ENCODE measurements at regions of chr4 and their contacts with region 1.

Region 1: GRCh38 chr4:38759113-38759789 is 23.5 kb downstream of the TLR10 start:
- H3K4me3 Mint-ChIP-seq: no peak overlapping the region
- H3K27ac Mint-ChIP-seq: peak overlapping the region; percentile 53
- H3K4me1 Mint-ChIP-seq: peaks cover 42% of the 10 kb centered on the region
- H3K27me3 Mint-ChIP-seq: no peaks in the 10 kb centered on the region

Region 2: GRCh38 chr4:38373375-38373774 is 385.9 kb before region 1 on chr4:
- intact Hi-C with region 1: no loop called
- H3K4me3 Mint-ChIP-seq: no peak overlapping the region
- H3K27ac Mint-ChIP-seq: peak overlapping the region; percentile 16
- H3K4me1 Mint-ChIP-seq: peaks cover 41% of the 10 kb centered on the region
- H3K27me3 Mint-ChIP-seq: no peaks in the 10 kb centered on the region

Region 3: DNA sequence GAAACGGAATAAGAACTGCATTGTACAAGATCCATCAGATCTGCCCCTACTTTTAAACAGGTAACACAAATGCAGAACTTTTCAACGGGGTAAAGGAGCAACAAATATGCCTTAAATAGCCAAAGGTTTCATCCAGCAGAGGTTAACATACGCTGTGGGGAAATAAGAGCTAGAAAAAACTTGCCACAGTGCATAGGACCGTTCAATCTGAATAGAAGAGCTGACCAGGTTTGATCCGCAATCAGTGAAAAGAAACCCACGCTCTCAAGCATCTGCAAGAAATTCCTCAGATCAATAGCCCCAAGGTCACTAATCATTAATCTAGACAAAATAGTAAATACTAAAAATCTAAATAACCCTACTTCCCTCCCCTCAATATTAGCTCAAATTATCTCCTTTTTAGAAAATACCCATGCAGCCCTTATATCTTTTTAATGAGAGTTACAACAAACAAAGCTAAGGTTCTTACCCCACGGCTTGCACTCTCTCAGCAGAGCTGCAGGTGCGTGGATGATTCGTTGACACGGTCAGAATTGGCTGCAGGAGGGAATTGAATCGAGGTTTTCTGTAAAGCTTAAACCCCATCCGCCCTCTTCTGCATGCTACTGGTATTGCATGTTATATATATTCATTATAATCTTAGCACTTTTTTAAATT is 23.3 kb after region 1 on chr4 and contains the start of gene TLR10:
- intact Hi-C with region 1: loop called (anchors 2 kb)
- H3K4me3 Mint-ChIP-seq: no peak within 1 kb of the TSS
- H3K27ac Mint-ChIP-seq: no peak within 1 kb of the TSS
- H3K4me1 Mint-ChIP-seq: peaks cover 44% of the 10 kb centered on the region
- H3K27me3 Mint-ChIP-seq: no peaks in the 10 kb centered on the region

Region 4: DNA sequence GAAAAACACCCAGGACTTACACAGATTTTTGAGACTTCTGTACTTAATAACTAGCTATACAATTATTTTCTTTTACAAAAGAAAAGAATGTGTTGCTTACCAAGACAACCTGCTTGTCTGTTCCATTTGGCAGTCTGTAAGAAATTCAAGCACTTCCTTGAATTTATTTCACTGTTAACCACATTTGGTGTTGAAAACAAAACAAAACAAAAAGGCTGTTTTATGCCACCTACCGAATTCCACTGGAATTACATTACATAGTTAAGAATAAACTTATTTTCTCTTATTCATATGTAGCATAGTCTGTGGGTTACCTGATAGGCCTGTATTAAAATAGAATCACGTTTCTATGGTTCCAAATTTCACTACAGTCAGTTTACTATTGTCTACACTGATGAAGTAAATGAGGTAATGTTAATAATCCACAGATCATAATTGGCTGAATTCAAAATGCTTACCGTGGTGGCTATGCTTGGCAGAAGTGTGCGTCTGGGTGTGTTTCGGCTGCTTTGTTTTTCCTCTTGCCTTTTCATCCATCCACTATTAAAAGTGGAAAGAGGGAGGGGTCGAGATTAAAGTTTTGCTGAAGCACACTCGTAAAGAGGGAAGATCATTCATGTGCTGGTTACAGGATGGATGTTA is 45.5 kb after region 1 on chr4 and contains the start of gene TLR1:
- intact Hi-C with region 1: loop called (anchors 1 kb)
- H3K4me3 Mint-ChIP-seq: peak within 1 kb of the TSS; percentile 88
- H3K27ac Mint-ChIP-seq: peak within 1 kb of the TSS; percentile 96
- H3K4me1 Mint-ChIP-seq: peaks cover 66% of the 10 kb centered on the region
- H3K27me3 Mint-ChIP-seq: no peaks in the 10 kb centered on the region

Region 5: GRCh38 chr4:39134683-39135319 is 375.6 kb after region 1 on chr4:
- intact Hi-C with region 1: loop called (anchors 2 kb)
- H3K4me3 Mint-ChIP-seq: no peak overlapping the region
- H3K27ac Mint-ChIP-seq: no peak overlapping the region
- H3K4me1 Mint-ChIP-seq: no peaks in the 10 kb centered on the region
- H3K27me3 Mint-ChIP-seq: no peaks in the 10 kb centered on the region

Measured in dendritic cell treated with granulocyte-macrophage colony-stimulating factor and Interleukin-4, amounts not matched to agents 40 ng/mL and 50 ng/mL, for 4 days (primary cell).